AG04449 (cell line): ENCODE measurements at regions of chr7 and their contacts with region 1.

Region 1: GRCh38 chr7:70856866-70857630 is 274.9 kb upstream of the GALNT17 start:
- DNase-seq: peak; percentile 5
- H3K4me3 ChIP-seq: no peak overlapping the region
- CTCF ChIP-seq: peak; percentile 78

Region 2: DNA sequence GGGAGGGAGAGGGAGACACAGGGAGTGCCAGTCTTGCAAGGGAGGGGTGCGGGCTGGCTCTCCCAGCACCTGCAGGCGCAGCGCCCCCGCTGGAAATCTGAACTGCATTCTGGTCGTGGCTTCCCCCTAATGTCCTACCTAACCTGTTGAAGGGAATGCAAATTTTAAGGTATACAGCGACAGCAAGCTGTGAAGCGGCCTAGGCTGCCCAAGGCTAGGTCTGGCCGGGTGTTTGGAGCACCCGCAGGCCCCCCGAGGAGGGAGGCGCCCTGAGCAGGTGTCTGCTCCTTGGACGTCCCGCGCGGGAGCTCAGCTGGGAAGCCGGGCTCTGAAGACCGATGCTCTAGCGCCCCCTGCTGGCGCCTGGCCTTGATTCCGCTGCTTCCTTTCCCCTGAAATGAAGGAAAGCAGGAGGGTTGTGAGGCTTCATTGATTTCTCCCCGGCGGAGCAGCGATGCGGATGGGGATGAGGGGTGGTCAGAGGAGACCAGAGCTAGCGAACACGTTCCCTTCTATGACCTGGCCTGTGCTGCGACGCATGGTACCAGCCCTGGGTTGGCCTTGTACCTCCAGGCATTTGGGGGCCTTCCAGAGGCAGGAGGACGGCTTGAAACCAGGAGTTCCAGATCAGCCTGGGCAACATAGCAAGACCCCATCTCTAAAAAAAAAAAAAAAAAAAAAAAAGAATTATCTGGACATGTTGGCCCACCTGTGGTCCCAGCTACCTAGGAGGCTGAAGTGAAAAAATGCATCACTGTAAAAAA is 876.2 kb after region 1 on chr7:
- CTCF ChIA-PET with region 1: interaction called, 185 read pairs
- POLR2A ChIA-PET with region 1: no interaction called
- DNase-seq: no peak
- H3K4me3 ChIP-seq: no peak overlapping the region
- CTCF ChIP-seq: peak; percentile 90